Activated CD4-positive, alpha-beta T cell treated with anti-CD3 and anti-CD28 coated beads for 36 hours (primary cell): ENCODE measurements at regions of chr17 and their contacts with region 1.

Region 1: DNA sequence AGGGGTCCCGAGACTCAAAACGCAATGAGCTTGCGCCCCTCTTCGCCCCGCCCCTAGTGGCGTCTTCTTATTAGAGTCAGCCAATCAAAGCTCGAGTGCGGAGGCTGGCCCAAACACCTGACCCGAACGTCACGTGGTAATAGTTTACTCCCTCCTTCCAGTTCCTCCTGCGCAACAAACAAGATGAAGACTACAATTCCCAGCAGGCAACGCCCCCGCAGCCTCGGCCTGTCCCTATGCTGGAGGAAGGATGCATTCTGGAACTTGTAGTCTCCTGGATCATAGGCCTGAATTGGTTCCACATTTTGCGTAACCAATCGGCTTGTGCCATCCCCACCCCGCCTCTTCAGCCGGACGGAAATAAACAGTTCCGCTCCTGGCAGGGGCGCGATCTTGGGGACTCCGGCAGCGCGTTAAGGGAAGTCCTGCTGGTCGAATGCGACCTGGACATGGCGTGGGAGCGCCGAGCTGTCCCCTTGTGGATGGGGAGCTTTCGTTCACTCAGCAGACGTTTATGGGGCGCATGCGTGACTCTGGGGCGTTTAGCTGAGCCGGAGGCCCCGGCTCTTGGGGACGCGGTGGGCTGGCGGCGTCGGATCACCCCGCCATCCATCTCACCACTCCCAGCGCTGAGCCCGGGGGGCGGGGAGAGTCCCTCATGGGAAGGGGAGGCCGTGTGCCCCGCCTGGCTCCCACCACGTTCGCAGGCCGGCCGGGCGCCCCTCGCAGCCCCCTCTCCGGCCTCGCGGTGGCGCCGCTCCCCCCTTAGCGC is at the start of gene WBP2:
- DNase-seq: peak; percentile 99
- ATAC-seq: peak; percentile 95
- H3K4me3 Mint-ChIP-seq: no peak within 1 kb of the TSS
- H3K27ac Mint-ChIP-seq: peak within 1 kb of the TSS; percentile 86
- H3K4me1 Mint-ChIP-seq: peaks cover 37% of the 10 kb centered on the region
- H3K27me3 Mint-ChIP-seq: no peaks in the 10 kb centered on the region
- total RNA-seq, gene WBP2: 68.7 to 74.1 TPM

Region 2: DNA sequence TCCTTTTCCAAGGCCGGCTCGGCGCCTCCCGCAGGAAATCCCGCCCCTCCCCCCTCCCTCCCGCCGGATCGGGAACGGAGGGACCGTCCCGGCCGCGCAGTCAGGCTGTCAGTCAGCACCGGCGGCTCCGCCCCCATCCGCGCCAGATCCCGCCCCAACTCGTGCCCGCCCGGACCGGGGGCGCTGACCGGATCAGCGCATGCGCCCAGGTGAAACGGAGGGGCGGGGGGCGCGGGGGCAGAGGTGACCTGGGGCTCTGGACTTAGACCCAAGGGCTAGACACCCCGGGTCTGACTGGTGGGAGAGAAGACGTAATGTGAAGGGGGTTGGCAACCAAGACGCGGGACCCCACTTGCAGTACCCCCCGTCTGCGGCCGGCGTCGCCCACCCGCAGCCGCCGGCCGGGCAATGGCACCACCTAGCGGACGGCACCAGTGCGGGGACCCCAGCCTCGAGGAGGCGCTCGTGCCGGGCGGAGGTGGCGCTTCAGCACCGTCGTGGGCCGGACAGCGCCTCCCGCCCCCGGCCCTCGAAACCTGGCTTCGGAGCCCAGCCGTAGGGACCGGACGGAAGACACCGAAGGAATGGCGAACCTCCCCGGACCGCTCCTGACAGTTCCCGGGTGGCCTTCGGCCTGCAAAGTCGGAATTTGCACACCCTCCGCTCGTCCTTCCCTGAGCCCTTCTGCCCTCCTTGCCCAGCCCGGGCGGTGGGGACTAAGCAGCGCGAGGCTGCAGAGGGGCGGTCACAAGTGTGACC is 339.8 kb before region 1 on chr17 and contains the start of gene CASKIN2:
- CTCF ChIA-PET with region 1: no interaction called
- POLR2A ChIA-PET with region 1: interaction called, 3 read pairs
- intact Hi-C with region 1: loop called in 1 of 2 experiments (anchors 1 kb)
- DNase-seq: peak; percentile 93
- ATAC-seq: peak; percentile 61
- H3K4me3 Mint-ChIP-seq: peak within 1 kb of the TSS; percentile 68
- H3K27ac Mint-ChIP-seq: no peak within 1 kb of the TSS
- H3K4me1 Mint-ChIP-seq: peaks cover 22% of the 10 kb centered on the region
- H3K27me3 Mint-ChIP-seq: peaks cover 3% of the 10 kb centered on the region
- total RNA-seq, gene CASKIN2: 2.9 to 3.0 TPM

Region 3: DNA sequence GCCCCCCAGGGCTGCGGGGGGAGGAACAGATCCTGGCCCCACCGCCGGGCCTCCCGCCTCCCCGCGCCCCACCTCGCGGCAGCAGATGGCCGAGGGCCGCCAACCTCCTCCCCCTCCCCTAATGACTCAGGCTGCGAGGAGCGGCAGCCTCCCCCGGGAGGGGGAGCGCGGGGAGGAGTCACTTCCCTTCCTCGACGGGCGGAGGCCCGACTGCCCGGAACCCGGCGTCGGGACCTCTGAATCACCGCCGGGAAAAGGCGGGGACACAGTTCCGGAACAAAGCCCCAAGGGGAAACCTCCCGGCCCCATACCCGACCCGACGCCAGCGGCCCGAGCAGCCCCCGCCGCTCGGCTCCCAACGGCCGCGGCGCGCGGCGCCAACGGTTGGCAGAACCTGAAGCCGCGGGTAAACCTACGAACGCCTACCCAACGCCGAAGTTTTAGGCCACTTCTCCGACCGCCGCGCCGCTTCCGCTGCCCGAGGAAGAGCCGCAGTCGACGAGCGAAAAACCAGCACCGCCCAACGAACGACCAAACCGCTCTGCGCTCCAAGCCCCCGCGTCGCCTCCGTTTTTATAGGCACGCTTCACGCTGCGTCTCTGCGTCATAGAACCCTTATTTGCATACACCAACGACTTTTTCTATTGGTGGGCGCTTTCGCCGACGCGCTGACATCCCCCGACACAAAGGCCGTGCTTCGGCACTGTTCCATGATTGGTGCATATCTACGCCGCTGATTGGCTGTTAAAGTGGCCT is 76.1 kb before region 1 on chr17:
- CTCF ChIA-PET with region 1: interaction called, 13 read pairs
- POLR2A ChIA-PET with region 1: interaction called, 25 read pairs
- intact Hi-C with region 1: loop called (anchors 1 kb)
- DNase-seq: peak; percentile 96
- ATAC-seq: peak; percentile 69
- H3K4me3 Mint-ChIP-seq: peak overlapping the region; percentile 98
- H3K27ac Mint-ChIP-seq: peak overlapping the region; percentile 99
- H3K4me1 Mint-ChIP-seq: peaks cover 46% of the 10 kb centered on the region
- H3K27me3 Mint-ChIP-seq: peaks cover 1% of the 10 kb centered on the region

Region 4: DNA sequence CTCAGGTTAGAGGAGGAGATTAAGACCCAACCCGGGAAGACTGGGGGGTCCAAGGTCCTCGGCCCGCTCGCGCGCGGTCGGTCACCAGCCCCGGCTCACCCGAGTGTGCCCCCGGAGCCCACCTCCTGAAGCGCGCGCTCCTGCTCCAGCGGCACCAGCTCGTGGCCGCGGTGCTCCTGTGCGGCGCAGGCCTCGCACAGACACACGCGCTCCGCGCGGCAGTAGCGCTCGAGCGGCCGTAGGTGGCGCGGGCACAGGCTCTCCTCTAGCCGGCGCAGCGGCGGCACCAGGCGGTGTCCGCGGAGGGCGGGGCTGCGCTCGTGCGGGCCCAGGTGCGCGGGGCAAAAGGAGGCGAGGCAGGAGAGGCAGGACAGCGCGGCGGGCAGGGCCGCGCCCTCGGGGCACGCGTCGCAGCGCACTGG is 22.3 kb after region 1 on chr17:
- CTCF ChIA-PET with region 1: interaction called, 10 read pairs
- POLR2A ChIA-PET with region 1: interaction called, 15 read pairs
- intact Hi-C with region 1: loop called in 1 of 2 experiments (anchors 1 kb)
- DNase-seq: peak; percentile 87
- ATAC-seq: peak; percentile 72
- H3K4me3 Mint-ChIP-seq: peak overlapping the region; percentile 91
- H3K27ac Mint-ChIP-seq: peak overlapping the region; percentile 94
- H3K4me1 Mint-ChIP-seq: peaks cover 26% of the 10 kb centered on the region
- H3K27me3 Mint-ChIP-seq: peaks cover 2% of the 10 kb centered on the region

Region 5: DNA sequence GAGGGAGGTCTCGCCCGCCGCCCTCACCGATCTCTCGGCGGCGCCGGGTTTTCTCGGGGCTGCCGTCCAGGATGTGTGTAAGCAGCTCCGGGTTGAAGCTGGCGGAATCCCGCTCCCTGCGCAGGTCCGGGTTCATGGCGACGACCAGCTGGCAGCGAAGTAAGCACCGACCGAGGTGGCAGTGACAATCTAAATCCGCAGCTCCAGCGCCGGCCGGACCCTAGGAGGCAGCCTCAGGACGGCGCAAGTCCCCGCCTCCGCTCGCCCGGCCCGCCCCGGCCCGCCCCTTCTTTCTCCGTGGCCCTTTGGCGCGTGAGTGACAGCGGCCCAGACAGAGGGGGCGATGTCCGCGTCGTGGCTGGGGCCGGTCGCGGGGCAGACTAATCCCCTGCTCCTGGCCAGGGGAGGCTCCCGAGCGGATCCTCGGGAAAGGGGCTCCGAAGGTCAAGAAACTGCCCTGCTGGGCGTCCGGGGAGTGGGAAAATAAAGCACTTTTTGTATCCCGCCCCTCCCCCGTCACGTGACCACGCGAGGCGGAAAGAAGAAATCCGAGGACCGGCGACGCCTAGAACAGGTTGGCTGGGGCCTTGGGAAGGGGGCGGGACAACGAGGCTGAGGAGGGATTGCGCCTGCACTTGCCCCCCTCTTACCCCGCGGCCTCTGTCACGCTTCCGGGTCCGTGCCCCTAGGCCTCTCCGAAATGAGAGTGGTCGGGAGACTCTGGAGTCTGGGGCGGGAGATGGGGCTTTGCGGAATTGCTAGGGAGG is 123.6 kb after region 1 on chr17 and contains the starts of genes ACOX1 and TEN1:
- CTCF ChIA-PET with region 1: no interaction called
- POLR2A ChIA-PET with region 1: no interaction called
- intact Hi-C with region 1: loop called in 1 of 2 experiments (anchors 1 kb)
- DNase-seq: peak; percentile 98
- ATAC-seq: peak; percentile 96
- H3K4me3 Mint-ChIP-seq: peak within 1 kb of the TSS; percentile 89
- H3K27ac Mint-ChIP-seq: peak within 1 kb of the TSS; percentile 94
- H3K4me1 Mint-ChIP-seq: peaks cover 30% of the 10 kb centered on the region
- H3K27me3 Mint-ChIP-seq: no peaks in the 10 kb centered on the region
- total RNA-seq, gene ACOX1: 27.7 to 33.1 TPM
- total RNA-seq, gene TEN1: 9.8 to 13.6 TPM